ENCODE measurements at regions of chr11 and their contacts with region 1.

Region 1: GRCh38 chr11:12724301-12725046 is 50.3 kb downstream of the TEAD1 start:
- DNase-seq: peak; percentile 36 to 61
- H3K4me3 ChIP-seq: no peak overlapping the region
- H3K4me3 Mint-ChIP-seq: peak overlapping the region; percentile 78
- H3K27ac Mint-ChIP-seq: peak overlapping the region; percentile 96
- H3K4me1 ChIP-seq: peaks cover 76% of the 10 kb centered on the region
- H3K4me1 Mint-ChIP-seq: peaks cover 82% of the 10 kb centered on the region
- H3K27me3 ChIP-seq: no peaks in the 10 kb centered on the region
- H3K27me3 Mint-ChIP-seq: no peaks in the 10 kb centered on the region
- CTCF ChIP-seq: no peak

Region 2: DNA sequence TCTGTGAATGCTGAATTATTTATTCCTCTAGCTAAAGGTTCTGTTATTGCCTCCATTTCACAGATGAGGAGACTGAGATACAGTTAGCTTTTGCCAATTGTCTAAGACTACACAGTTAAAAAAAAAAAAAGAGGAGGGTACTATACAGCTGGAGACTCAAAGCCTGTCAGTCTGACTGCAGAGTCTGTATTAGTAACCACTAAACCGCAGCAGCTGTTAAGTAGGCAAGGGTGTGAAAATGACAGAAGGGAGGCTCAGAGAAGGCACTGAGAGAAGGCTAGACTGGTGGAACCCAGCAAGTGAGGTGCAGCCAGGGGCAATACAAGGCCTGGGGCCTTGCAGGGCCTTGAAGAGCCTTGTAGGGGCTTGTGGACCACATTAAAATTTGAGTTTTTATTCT is 1552.6 kb before region 1 on chr11:
- CTCF ChIA-PET with region 1: no interaction called
- POLR2A ChIA-PET with region 1: no interaction called
- intact Hi-C with region 1: no loop called
- DNase-seq: no peak
- H3K4me3 ChIP-seq: no peak overlapping the region
- H3K4me3 Mint-ChIP-seq: no peak overlapping the region
- H3K27ac Mint-ChIP-seq: no peak overlapping the region
- H3K4me1 ChIP-seq: no peaks in the 10 kb centered on the region
- H3K4me1 Mint-ChIP-seq: no peaks in the 10 kb centered on the region
- H3K27me3 ChIP-seq: peaks cover 1% of the 10 kb centered on the region
- H3K27me3 Mint-ChIP-seq: peaks cover 7% of the 10 kb centered on the region
- CTCF ChIP-seq: no peak

Region 3: GRCh38 chr11:12673924-12674570 is 50.4 kb before region 1 on chr11 and contains the start of gene TEAD1:
- CTCF ChIA-PET with region 1: no interaction called
- POLR2A ChIA-PET with region 1: no interaction called
- intact Hi-C with region 1: loop called (anchors 2 kb)
- DNase-seq: peak; percentile 97 to 100
- H3K4me3 ChIP-seq: peak within 1 kb of the TSS; percentile 81
- H3K4me3 Mint-ChIP-seq: peak within 1 kb of the TSS; percentile 79
- H3K27ac Mint-ChIP-seq: peak within 1 kb of the TSS; percentile 91
- H3K4me1 ChIP-seq: peaks cover 20% of the 10 kb centered on the region; the same call in 1 of the 2 replicates
- H3K4me1 Mint-ChIP-seq: peaks cover 32% of the 10 kb centered on the region
- H3K27me3 ChIP-seq: no peaks in the 10 kb centered on the region
- H3K27me3 Mint-ChIP-seq: no peaks in the 10 kb centered on the region
- CTCF ChIP-seq: no peak
- total RNA-seq, gene TEAD1: 134 and 144 TPM in 2 replicates

Region 4: DNA sequence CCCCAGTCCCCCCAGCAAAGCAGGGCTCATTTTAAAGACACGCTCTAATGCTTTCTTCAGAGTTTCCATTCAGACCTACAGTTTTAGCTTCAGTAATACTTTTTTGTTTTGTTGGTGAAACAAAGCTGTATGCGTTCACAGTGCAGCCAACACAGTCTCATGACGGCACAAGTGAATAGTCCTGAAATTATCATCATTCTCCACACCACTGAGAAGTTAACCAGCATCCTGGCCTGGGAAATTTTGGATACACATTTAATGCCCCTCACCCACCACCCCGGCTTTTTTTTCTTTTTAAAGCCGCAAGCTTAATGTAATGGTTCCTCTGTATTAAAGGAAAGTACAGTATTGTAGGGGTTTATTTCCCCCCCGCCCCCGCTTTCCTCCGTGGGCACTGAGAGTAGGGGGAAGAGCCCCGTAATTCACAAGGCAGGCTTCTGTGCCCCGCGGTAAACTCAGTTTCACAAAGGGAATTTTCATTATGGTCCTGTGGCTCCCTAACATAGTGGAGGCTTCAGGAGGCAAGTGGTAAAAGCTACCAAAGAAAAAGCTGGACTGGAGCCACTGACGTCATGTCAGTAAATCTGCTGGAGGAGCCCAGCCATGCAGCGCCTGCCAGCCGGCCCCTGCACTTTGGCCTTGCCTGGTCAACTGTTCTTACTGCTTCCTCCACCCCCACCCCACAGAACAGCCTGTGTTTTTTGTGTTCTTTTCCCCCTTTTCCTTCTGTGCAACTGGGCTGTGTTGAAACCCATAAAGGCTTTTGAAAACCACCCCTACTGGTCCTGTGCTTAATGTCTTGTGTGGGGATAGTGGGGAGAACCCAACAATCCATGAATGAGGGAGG is 32.0 kb before region 1 on chr11:
- CTCF ChIA-PET with region 1: no interaction called
- POLR2A ChIA-PET with region 1: interaction called, 4 read pairs
- intact Hi-C with region 1: loop called (anchors 1 kb)
- DNase-seq: peak; percentile 80 to 86
- H3K4me3 ChIP-seq: no peak overlapping the region
- H3K4me3 Mint-ChIP-seq: peak overlapping the region; percentile 62
- H3K27ac Mint-ChIP-seq: peak overlapping the region; percentile 82
- H3K4me1 ChIP-seq: peaks cover 88% of the 10 kb centered on the region
- H3K4me1 Mint-ChIP-seq: peaks cover 84% of the 10 kb centered on the region
- H3K27me3 ChIP-seq: no peaks in the 10 kb centered on the region
- H3K27me3 Mint-ChIP-seq: no peaks in the 10 kb centered on the region
- CTCF ChIP-seq: no peak

Region 5: GRCh38 chr11:12761029-12761428 is 36.6 kb after region 1 on chr11:
- CTCF ChIA-PET with region 1: no interaction called
- POLR2A ChIA-PET with region 1: no interaction called
- intact Hi-C with region 1: loop called (anchors 5 kb)
- DNase-seq: no peak
- H3K4me3 ChIP-seq: no peak overlapping the region
- H3K4me3 Mint-ChIP-seq: no peak overlapping the region
- H3K27ac Mint-ChIP-seq: no peak overlapping the region
- H3K4me1 ChIP-seq: peaks cover 24% of the 10 kb centered on the region
- H3K4me1 Mint-ChIP-seq: peaks cover 30% of the 10 kb centered on the region
- H3K27me3 ChIP-seq: no peaks in the 10 kb centered on the region
- H3K27me3 Mint-ChIP-seq: no peaks in the 10 kb centered on the region
- CTCF ChIP-seq: peak in 1 of 2 experiments; percentile 43

Region 6: GRCh38 chr11:12845739-12846358 is 121.4 kb after region 1 on chr11:
- CTCF ChIA-PET with region 1: no interaction called
- POLR2A ChIA-PET with region 1: no interaction called
- intact Hi-C with region 1: loop called (anchors 5 kb)
- DNase-seq: peak; percentile 79 to 90
- H3K4me3 ChIP-seq: no peak overlapping the region
- H3K4me3 Mint-ChIP-seq: peak overlapping the region; percentile 62
- H3K27ac Mint-ChIP-seq: peak overlapping the region; percentile 93
- H3K4me1 ChIP-seq: peaks cover 45% of the 10 kb centered on the region
- H3K4me1 Mint-ChIP-seq: peaks cover 19% of the 10 kb centered on the region
- H3K27me3 ChIP-seq: no peaks in the 10 kb centered on the region
- H3K27me3 Mint-ChIP-seq: no peaks in the 10 kb centered on the region
- CTCF ChIP-seq: no peak

Measured in Caco-2 (cell line).